AG04449 (cell line): ENCODE measurements at regions of chr14 and their contacts with region 1.

Region 1: GRCh38 chr14:53295985-53296582 is 143.0 kb upstream of the DDHD1 start:
- DNase-seq: no peak
- H3K4me3 ChIP-seq: no peak overlapping the region
- CTCF ChIP-seq: peak; percentile 29

Region 2: DNA sequence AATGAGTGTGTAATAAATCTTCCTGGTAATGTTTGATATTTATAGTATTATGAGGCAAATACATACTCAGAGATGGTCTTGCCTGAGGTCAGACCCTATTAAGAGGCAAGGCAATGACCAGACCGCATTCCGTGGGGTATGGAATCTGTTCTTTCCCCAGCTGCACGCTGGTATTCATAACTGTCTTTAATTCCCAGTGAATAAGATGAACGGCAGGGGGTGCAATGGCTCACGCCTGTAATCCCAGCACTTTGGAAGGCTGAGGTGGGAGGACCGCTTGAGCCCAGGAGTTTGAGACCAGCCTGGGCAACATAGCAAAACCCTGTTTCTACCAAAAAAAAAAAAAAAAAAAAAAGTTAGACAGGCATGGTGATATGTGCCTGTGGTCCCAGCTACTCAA is 645.3 kb before region 1 on chr14:
- CTCF ChIA-PET with region 1: no interaction called
- POLR2A ChIA-PET with region 1: no interaction called
- DNase-seq: no peak
- H3K4me3 ChIP-seq: no peak overlapping the region
- CTCF ChIP-seq: no peak

Region 3: DNA sequence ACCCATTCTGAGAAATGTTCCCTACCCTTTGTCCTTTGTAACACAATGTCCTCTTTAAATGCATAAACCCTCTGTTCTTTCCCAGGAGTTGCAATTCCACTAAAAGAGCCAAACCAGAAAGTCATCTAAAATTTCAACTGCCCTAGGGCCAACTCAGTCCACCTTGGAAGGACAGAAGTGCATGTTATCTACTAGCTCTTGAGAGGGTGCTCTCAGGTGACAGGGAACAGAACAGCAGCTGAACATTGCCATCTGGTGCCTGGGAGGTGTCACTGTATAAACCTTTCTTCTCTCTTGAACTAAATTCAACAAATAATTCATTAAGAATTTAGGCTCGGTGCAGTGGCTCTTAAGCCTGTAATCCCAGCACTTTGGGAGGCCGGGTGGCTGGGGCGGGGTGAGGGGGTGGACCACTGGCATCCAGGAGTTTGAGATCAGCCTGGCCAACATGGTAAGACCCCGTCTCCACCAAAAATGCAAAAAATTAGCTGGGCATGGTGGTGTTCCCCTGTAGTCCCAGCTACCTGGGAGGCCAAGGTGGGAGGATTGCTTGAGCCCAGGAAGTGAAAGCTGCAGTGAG is 334.9 kb before region 1 on chr14:
- CTCF ChIA-PET with region 1: no interaction called
- POLR2A ChIA-PET with region 1: no interaction called
- DNase-seq: no peak
- H3K4me3 ChIP-seq: no peak overlapping the region
- CTCF ChIP-seq: peak; percentile 48

Region 4: DNA sequence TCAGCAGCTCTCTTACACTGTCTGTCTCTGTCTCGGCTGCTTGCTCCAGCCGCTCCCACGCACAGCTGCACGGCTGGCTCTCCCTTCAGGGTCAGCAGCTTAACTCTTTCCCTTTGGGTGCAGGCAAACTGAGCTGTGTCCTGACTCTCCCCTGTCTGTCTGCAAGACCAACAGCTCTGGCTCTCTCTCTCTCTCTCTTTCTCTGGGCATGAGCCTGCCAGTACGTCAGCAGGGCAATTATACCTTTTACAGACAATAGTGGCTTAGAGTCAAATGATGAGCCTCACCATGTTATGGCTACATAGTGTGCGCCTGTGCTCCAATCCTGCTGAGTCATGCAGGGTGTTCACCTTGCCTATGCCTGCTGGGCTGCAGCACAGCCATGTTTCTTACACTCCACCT is 22.4 kb before region 1 on chr14:
- CTCF ChIA-PET with region 1: interaction called, 19 read pairs
- POLR2A ChIA-PET with region 1: no interaction called
- DNase-seq: no peak
- H3K4me3 ChIP-seq: no peak overlapping the region
- CTCF ChIP-seq: no peak

Region 5: GRCh38 chr14:53278930-53279506 is 17.1 kb before region 1 on chr14:
- CTCF ChIA-PET with region 1: interaction called, 19 read pairs
- POLR2A ChIA-PET with region 1: no interaction called
- DNase-seq: no peak
- H3K4me3 ChIP-seq: no peak overlapping the region
- CTCF ChIP-seq: no peak

Region 6: GRCh38 chr14:53285064-53285463 is 11.0 kb before region 1 on chr14:
- CTCF ChIA-PET with region 1: interaction called, 19 read pairs
- POLR2A ChIA-PET with region 1: no interaction called
- DNase-seq: no peak
- H3K4me3 ChIP-seq: no peak overlapping the region
- CTCF ChIP-seq: no peak

Region 7: GRCh38 chr14:53306267-53306721 is 10.2 kb after region 1 on chr14:
- CTCF ChIA-PET with region 1: interaction called, 83 read pairs
- POLR2A ChIA-PET with region 1: no interaction called
- DNase-seq: no peak
- H3K4me3 ChIP-seq: peak overlapping the region; percentile 51
- CTCF ChIP-seq: peak; percentile 61

Region 8: GRCh38 chr14:53316499-53316898 is 20.4 kb after region 1 on chr14:
- CTCF ChIA-PET with region 1: interaction called, 10 read pairs
- POLR2A ChIA-PET with region 1: no interaction called
- DNase-seq: no peak
- H3K4me3 ChIP-seq: no peak overlapping the region
- CTCF ChIP-seq: no peak

Region 9: GRCh38 chr14:53325176-53325806 is 29.2 kb after region 1 on chr14:
- CTCF ChIA-PET with region 1: interaction called, 17 read pairs
- POLR2A ChIA-PET with region 1: no interaction called
- DNase-seq: no peak
- H3K4me3 ChIP-seq: no peak overlapping the region
- CTCF ChIP-seq: no peak